A673 (cell line): ENCODE measurements at regions of chr3 and their contacts with region 1.

Region 1: GRCh38 chr3:87167628-87168456 is 59.3 kb upstream of the CHMP2B start:
- DNase-seq: peak; percentile 73
- H3K4me3 ChIP-seq: peak overlapping the region; percentile 42
- H3K27ac ChIP-seq: no peak overlapping the region
- H3K4me1 ChIP-seq: no peaks in the 10 kb centered on the region
- H3K27me3 ChIP-seq: no peaks in the 10 kb centered on the region
- CTCF ChIP-seq: peak; percentile 85

Region 2: DNA sequence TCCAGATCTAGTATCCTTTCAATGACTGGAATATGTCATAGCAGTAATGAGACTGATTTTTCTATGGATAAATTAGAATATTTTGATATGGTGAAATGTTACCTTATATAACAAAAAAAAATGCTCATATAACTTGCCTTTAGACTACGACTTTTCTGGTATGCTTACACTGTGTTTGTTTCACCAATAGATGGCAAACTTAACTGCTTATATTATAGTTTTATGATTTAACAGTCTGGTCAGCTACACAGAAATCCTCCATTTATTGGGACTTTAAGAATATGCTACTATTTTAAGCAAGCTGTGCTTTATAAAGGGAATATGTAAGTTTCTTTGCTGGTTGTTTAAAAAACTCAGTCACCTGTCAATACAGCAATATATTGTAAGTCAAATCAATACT is 382.5 kb before region 1 on chr3:
- CTCF ChIA-PET with region 1: no interaction called
- POLR2A ChIA-PET with region 1: no interaction called
- intact Hi-C with region 1: loop called (anchors 2 kb)
- DNase-seq: peak; percentile 28
- H3K4me3 ChIP-seq: no peak overlapping the region
- H3K27ac ChIP-seq: no peak overlapping the region
- H3K4me1 ChIP-seq: peaks cover 8% of the 10 kb centered on the region
- H3K27me3 ChIP-seq: no peaks in the 10 kb centered on the region
- CTCF ChIP-seq: peak; percentile 54

Region 3: GRCh38 chr3:86867982-86868381 is 299.9 kb before region 1 on chr3:
- CTCF ChIA-PET with region 1: no interaction called
- POLR2A ChIA-PET with region 1: no interaction called
- intact Hi-C with region 1: no loop called
- DNase-seq: no peak
- H3K4me3 ChIP-seq: no peak overlapping the region
- H3K27ac ChIP-seq: no peak overlapping the region
- H3K4me1 ChIP-seq: no peaks in the 10 kb centered on the region
- H3K27me3 ChIP-seq: no peaks in the 10 kb centered on the region
- CTCF ChIP-seq: no peak

Region 4: GRCh38 chr3:87088993-87089841 is 78.6 kb before region 1 on chr3:
- CTCF ChIA-PET with region 1: interaction called, 3 read pairs
- POLR2A ChIA-PET with region 1: no interaction called
- intact Hi-C with region 1: loop called (anchors 5 kb)
- DNase-seq: peak; percentile 81
- H3K4me3 ChIP-seq: peak overlapping the region; percentile 48
- H3K27ac ChIP-seq: peak overlapping the region; percentile 54
- H3K4me1 ChIP-seq: no peaks in the 10 kb centered on the region
- H3K27me3 ChIP-seq: no peaks in the 10 kb centered on the region
- CTCF ChIP-seq: no peak